H1 (cell line): ENCODE measurements at regions of chr2 and their contacts with region 1.

Region 1: GRCh38 chr2:73156539-73157124 is 43.9 kb upstream of the RAB11FIP5 start:
- DNase-seq: peak; percentile 77 to 89
- H3K4me3 ChIP-seq: peak overlapping the region; percentile 20 to 54 (median 38); a peak in 6 of 8 replicates
- H3K27ac ChIP-seq: no peak overlapping the region
- H3K4me1 ChIP-seq: peaks cover 0 to 3% (median 0%) of the 10 kb centered on the region in 4 experiments; a peak in 2 of 7 replicates
- H3K27me3 ChIP-seq: peaks cover 0 to 7% (median 2%) of the 10 kb centered on the region in 4 experiments; a peak in 4 of 7 replicates
- CTCF ChIP-seq: peak; percentile 95 to 99 (median 95)
- EP300 ChIP-seq: peak in 1 of 2 experiments; percentile 31; a peak in 1 of 3 replicates
- POLR2A ChIP-seq: no peak
- RAD21 ChIP-seq: peak; percentile 95 to 98

Region 2: DNA sequence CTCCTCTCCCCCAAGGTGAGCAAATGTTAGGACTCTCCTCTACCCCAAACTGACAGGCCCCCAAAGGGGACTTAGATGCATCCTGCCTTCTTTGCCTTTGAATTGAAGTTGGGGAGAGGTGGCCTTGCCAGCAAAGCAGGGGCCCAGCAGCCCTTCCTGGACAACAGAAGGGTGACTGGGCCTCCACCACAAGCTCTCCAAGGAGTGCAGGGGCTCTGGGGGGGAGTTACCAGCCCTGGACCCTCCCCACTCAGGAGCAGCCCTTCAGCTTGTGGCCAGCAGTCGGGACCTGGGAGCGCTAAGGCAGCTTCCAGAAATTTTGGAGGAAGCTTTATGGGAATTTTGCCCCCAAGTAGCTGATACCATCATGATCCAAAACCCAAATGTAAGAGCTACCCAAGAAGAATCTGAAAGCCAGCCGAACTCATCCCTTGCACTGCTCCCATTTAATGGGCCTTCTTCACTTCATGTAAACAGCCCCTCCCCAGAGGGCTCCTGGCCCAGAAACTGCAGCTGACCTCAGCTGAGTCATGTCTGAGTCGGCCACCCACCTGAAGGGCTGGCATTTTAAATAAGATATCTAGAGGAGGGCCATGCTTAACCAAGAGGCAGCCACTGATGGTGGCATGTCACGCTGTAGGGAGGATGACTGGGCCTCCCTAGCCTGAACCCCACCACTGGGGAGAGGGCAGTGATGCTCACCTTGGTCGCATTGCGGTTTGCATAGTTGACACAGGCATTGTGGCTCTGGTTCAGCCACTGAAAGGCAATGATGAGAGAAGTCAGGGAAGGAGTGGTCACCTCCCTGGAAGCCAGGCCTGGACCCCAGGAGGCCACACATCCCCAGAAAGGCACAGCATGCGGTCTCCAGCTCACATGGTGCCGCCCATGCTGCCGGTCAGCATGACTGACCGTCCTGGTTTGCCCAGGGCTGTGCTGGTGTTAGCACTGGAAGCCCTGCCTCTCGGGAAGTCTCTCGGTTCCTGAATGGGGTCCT is 156.6 kb before region 1 on chr2:
- CTCF ChIA-PET with region 1: interaction called, 13 read pairs
- POLR2A ChIA-PET with region 1: no interaction called
- DNase-seq: peak in 1 of 2 experiments; percentile 38
- H3K4me3 ChIP-seq: no peak overlapping the region
- H3K27ac ChIP-seq: no peak overlapping the region
- H3K4me1 ChIP-seq: no peaks in the 10 kb centered on the region; a peak in 1 of 7 replicates
- H3K27me3 ChIP-seq: no peaks in the 10 kb centered on the region
- CTCF ChIP-seq: no peak
- EP300 ChIP-seq: no peak
- POLR2A ChIP-seq: no peak
- RAD21 ChIP-seq: no peak

Region 3: DNA sequence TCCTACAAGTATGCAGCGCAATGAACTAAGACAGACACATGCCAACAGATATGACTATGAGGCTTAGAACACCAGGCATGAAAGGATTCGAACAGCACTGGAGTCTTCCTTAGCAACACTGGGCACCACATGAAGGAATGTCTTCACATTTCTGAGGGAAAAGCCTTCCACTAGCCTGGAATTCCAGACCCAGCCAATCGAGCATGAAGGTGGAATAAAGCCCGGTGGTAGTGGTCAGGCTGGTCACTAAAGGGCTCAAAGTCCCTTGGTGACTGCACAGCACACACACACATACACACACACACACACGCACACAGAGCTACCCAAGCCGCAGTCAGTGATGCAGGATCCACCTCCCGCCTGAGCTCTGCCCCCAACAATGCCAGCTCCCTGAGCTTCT is 65.5 kb before region 1 on chr2:
- CTCF ChIA-PET with region 1: interaction called, 321 read pairs
- POLR2A ChIA-PET with region 1: interaction called, 12 read pairs
- DNase-seq: no peak
- H3K4me3 ChIP-seq: no peak overlapping the region
- H3K27ac ChIP-seq: no peak overlapping the region
- H3K4me1 ChIP-seq: no peaks in the 10 kb centered on the region; a peak in 1 of 7 replicates
- H3K27me3 ChIP-seq: no peaks in the 10 kb centered on the region
- CTCF ChIP-seq: no peak
- EP300 ChIP-seq: no peak
- POLR2A ChIP-seq: no peak
- RAD21 ChIP-seq: no peak

Region 4: GRCh38 chr2:73112913-73113633 is 43.6 kb before region 1 on chr2 and contains the start of gene RAB11FIP5:
- CTCF ChIA-PET with region 1: interaction called, 25 read pairs
- POLR2A ChIA-PET with region 1: interaction called, 9 read pairs
- DNase-seq: peak in 1 of 2 experiments; percentile 91
- H3K4me3 ChIP-seq: peak within 1 kb of the TSS; percentile 58 to 73 (median 66)
- H3K27ac ChIP-seq: no peak within 1 kb of the TSS
- H3K4me1 ChIP-seq: peaks cover 10 to 14% (median 12%) of the 10 kb centered on the region in 4 experiments; a peak in 6 of 7 replicates
- H3K27me3 ChIP-seq: no peaks in the 10 kb centered on the region; a peak in 2 of 7 replicates
- CTCF ChIP-seq: no peak
- EP300 ChIP-seq: no peak
- POLR2A ChIP-seq: 0 out of 3 replicates have a peak, but pooled peaks of 1 of the 2 experiments have one; percentile 26
- RAD21 ChIP-seq: no peak
- total RNA-seq, gene RAB11FIP5: 13.5 and 17.0 TPM in 2 replicates

Region 5: GRCh38 chr2:73142937-73143336 is 13.7 kb before region 1 on chr2:
- CTCF ChIA-PET with region 1: interaction called, 13 read pairs
- POLR2A ChIA-PET with region 1: interaction called, 4 read pairs
- DNase-seq: no peak
- H3K4me3 ChIP-seq: no peak overlapping the region
- H3K27ac ChIP-seq: no peak overlapping the region
- H3K4me1 ChIP-seq: no peaks in the 10 kb centered on the region
- H3K27me3 ChIP-seq: peaks cover 0 to 3% (median 0%) of the 10 kb centered on the region in 4 experiments; a peak in 1 of 7 replicates
- CTCF ChIP-seq: no peak
- EP300 ChIP-seq: no peak
- POLR2A ChIP-seq: no peak
- RAD21 ChIP-seq: no peak

Region 6: DNA sequence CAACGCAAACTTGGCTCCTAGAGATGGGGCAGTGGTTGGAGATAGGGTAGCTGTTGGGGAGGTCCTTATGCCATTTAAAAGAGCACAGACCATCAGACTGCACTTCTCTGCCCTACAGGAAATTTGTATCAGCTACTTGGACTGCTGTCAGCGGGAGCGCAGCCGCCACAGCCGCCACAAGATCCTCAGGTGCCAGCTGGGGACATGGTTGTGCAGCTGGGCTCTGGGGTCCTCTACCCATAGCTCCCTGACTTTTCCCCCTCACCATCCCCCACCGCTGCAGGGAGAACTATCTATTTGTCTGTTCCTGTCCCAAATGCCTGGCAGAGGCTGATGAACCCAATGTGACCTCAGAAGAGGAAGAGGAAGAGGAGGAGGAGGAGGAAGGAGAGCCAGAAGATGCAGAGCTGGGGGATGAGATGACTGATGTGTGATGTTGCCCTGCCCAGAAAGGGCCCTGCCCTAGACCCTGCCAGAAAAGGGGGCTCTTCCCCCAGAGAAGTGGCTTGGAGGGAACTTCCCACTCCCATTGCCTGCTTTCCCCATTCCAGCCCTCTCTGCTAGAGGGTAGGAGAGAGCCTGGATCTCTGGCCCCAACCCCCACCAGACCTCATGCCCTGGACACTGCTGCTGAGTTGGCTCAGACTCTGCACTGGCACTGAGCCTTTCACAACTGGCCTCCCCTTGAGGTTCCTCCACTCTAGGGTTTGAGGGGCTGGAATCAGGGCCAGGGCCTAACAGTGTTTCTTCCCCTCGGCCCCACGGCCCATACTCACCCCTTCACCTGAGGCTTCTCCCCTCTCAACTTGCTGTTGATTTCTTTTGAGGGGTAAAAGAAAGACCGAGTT is 69.1 kb after region 1 on chr2:
- CTCF ChIA-PET with region 1: no interaction called
- POLR2A ChIA-PET with region 1: no interaction called
- DNase-seq: no peak
- H3K4me3 ChIP-seq: no peak overlapping the region
- H3K27ac ChIP-seq: no peak overlapping the region
- H3K4me1 ChIP-seq: no peaks in the 10 kb centered on the region
- H3K27me3 ChIP-seq: no peaks in the 10 kb centered on the region
- CTCF ChIP-seq: no peak
- EP300 ChIP-seq: no peak
- POLR2A ChIP-seq: no peak
- RAD21 ChIP-seq: no peak

Region 7: GRCh38 chr2:73243884-73244570 is 87.4 kb after region 1 on chr2:
- CTCF ChIA-PET with region 1: no interaction called
- POLR2A ChIA-PET with region 1: no interaction called
- DNase-seq: no peak
- H3K4me3 ChIP-seq: no peak overlapping the region
- H3K27ac ChIP-seq: no peak overlapping the region
- H3K4me1 ChIP-seq: peaks cover 0 to 2% (median under 1%) of the 10 kb centered on the region in 4 experiments; a peak in 1 of 7 replicates
- H3K27me3 ChIP-seq: no peaks in the 10 kb centered on the region
- CTCF ChIP-seq: no peak
- EP300 ChIP-seq: no peak
- POLR2A ChIP-seq: no peak
- RAD21 ChIP-seq: no peak